ENCODE measurements at regions of chr16 and their contacts with region 1.

Region 1: DNA sequence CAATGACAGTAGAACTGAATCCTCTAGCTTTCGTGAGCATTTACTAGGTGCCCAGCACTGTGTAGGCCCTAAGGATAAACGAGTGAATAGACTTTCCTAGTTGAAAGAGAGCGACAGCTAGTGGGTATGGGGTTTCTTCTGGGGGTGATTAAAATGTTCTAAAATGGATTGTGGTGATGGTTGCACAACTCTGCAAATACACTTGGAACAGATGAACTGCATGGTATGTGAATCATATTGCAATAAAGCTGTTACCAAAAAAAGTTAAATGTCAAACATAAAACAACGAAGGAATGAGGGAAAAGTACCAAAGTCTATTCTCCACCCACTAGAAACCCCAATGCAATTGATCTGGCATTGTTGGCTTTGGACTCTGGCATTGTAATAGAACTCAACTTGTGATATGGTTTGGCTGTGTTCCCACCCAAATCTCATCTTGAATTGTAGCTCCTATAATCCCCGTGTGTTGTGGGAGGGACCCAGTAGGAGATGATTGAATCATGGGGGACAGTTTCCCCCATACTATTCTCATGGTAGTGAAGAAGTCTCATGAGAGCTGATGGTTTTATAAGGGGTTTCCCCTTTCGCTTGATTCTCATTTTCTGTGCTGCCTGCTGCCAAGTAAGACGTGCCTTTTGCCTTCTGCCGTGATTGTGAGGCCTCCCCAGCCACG is 70.5 kb downstream of the MARF1 start:
- DNase-seq: peak; percentile 83
- ATAC-seq: peak; percentile 16
- H3K4me3 ChIP-seq: no peak overlapping the region
- H3K27ac ChIP-seq: peak overlapping the region; percentile 20
- H3K4me1 ChIP-seq: peaks cover 62% of the 10 kb centered on the region
- H3K27me3 ChIP-seq: no peaks in the 10 kb centered on the region
- CTCF ChIP-seq: no peak
- EP300 ChIP-seq: peak in 1 of 2 experiments; percentile 72; a peak in 1 of 4 replicates
- POLR2A ChIP-seq: no peak
- RAD21 ChIP-seq: no peak

Region 2: GRCh38 chr16:15553313-15554088 is 19.0 kb before region 1 on chr16:
- CTCF ChIA-PET with region 1: no interaction called
- POLR2A ChIA-PET with region 1: interaction called, 19 read pairs
- in situ Hi-C with region 1: no loop called
- intact Hi-C with region 1: no loop called
- DNase-seq: no peak
- ATAC-seq: no peak
- H3K4me3 ChIP-seq: no peak overlapping the region
- H3K27ac ChIP-seq: no peak overlapping the region
- H3K4me1 ChIP-seq: peaks cover 18% of the 10 kb centered on the region
- H3K27me3 ChIP-seq: no peaks in the 10 kb centered on the region
- CTCF ChIP-seq: no peak
- EP300 ChIP-seq: no peak
- POLR2A ChIP-seq: no peak
- RAD21 ChIP-seq: no peak

Region 3: DNA sequence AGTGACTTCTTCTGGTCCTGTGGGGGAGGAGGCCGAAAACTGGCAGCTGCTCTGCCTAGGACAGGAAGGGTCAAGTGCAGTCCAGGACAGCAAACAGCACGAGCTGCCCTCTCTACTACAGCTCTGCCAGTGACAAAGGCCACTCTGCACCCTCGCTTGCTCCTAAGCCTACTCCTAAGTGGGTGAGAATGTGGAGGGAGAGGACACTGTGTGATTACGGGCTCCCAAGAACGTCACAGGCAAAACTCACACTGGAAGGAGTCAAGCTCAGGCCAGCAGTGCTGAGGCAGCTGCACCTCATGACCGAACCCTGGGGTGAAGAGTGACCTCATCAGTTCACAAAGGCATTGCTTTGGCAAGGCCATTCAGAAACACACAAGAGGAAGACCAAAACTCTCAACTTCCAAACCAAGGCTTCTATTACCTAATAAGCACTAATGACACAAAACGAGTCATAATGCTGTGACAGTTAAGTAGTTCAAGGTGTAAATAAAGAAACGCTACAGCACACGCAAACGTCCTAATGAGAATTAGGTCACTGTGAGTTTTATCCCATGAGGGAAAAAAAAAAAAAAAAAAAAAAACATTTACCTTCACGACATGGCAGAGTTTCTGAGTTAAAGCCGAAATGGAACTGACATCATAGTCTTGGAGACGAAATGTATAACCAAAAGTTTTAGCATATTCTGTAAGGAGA is 35.4 kb after region 1 on chr16:
- CTCF ChIA-PET with region 1: no interaction called
- POLR2A ChIA-PET with region 1: interaction called, 57 read pairs
- in situ Hi-C with region 1: no loop called
- intact Hi-C with region 1: no loop called
- DNase-seq: peak; percentile 67
- ATAC-seq: peak; percentile 67
- H3K4me3 ChIP-seq: no peak overlapping the region
- H3K27ac ChIP-seq: peak overlapping the region; percentile 58
- H3K4me1 ChIP-seq: peaks cover 66% of the 10 kb centered on the region
- H3K27me3 ChIP-seq: no peaks in the 10 kb centered on the region
- CTCF ChIP-seq: 0 out of 2 replicates have a peak, but pooled peaks have one; percentile 18
- EP300 ChIP-seq: no peak
- POLR2A ChIP-seq: no peak
- RAD21 ChIP-seq: no peak

Region 4: DNA sequence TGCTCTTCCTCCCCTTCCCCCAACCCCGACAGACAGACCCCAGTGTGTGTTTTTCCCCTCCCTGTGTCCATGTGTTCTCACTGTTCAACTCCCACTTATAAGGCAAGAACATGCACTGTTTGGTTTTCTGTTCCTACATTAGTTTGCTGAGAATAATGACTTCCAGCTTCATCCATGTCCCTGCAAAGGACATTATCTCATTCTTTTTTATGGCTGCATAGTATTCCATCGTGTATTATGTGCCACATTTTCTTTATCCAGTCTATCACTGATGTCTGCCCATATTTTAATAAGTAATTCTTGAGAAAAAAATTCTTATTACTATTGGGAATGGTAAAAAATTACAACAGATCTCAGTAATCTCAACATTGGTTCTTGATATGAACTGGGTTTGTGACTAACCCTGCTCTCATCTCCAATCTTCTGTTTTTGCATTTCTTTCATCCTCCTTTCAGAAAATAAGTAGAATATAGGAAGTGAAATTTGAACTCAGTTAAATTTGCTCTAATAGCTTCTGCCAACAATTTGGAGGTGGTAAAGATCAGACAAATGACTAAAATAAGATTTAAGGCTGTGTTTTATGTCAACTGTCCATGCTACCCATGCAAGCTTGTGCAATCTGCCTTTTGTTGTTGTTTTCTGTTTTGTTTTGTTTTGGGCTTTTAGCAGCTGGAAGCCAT is 59.4 kb after region 1 on chr16:
- CTCF ChIA-PET with region 1: no interaction called
- POLR2A ChIA-PET with region 1: interaction called, 13 read pairs
- in situ Hi-C with region 1: no loop called
- intact Hi-C with region 1: no loop called
- DNase-seq: no peak
- ATAC-seq: no peak
- H3K4me3 ChIP-seq: no peak overlapping the region
- H3K27ac ChIP-seq: no peak overlapping the region
- H3K4me1 ChIP-seq: peaks cover 36% of the 10 kb centered on the region
- H3K27me3 ChIP-seq: no peaks in the 10 kb centered on the region
- CTCF ChIP-seq: no peak
- EP300 ChIP-seq: no peak
- POLR2A ChIP-seq: no peak
- RAD21 ChIP-seq: no peak